ENCODE measurements at regions of chr15 and their contacts with region 1.

Region 1: GRCh38 chr15:81265944-81266775 is 57.8 kb downstream of the STARD5 start:
- DNase-seq: peak; percentile 47 to 89 (median 75)
- ATAC-seq: peak; percentile 89 to 91 (median 90)
- H3K4me3 ChIP-seq: peak overlapping the region; percentile 0 to 49
- H3K4me3 Mint-ChIP-seq: peak overlapping the region; percentile 64 to 72 (median 64)
- H3K27ac ChIP-seq: no peak overlapping the region
- H3K27ac Mint-ChIP-seq: peak overlapping the region in 1 of 2 donors; percentile 40
- H3K4me1 ChIP-seq: peaks cover 25 to 31% of the 10 kb centered on the region in 2 experiments
- H3K4me1 Mint-ChIP-seq: peaks cover 27 to 37% (median 36%) of the 10 kb centered on the region in 3 donors
- H3K27me3 ChIP-seq: peaks cover 0 to 17% of the 10 kb centered on the region in 2 experiments
- H3K27me3 Mint-ChIP-seq: no peaks in the 10 kb centered on the region

Region 2: DNA sequence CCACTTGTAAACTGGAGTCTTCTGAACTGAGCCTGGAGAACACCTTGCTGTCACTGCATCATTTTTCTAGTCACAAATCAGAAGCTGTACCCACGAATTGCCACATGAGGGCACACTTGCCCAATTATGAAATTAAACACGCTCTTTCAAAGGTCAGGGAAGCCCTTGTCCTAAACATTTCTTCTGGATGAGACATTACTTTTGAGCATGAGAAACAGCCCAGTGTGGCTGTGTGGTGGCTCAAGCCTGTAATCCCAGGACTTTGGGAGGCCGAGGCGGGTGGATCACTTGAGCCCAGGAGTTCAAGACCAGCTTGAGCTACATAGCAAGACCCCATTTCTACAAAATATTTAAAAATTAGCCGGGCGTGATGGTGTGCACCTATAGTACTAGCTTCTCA is 159.6 kb before region 1 on chr15:
- CTCF ChIA-PET with region 1: interaction called, 10 to 37 read pairs
- POLR2A ChIA-PET with region 1: no interaction called
- DNase-seq: peak in 21 of 35 experiments; percentile 4 to 62 (median 21)
- ATAC-seq: peak in 1 of 4 experiments; percentile 65
- H3K4me3 ChIP-seq: no peak overlapping the region
- H3K4me3 Mint-ChIP-seq: no peak overlapping the region
- H3K27ac ChIP-seq: no peak overlapping the region
- H3K27ac Mint-ChIP-seq: peak overlapping the region in 1 of 2 donors; percentile 16
- H3K4me1 ChIP-seq: no peaks in the 10 kb centered on the region
- H3K4me1 Mint-ChIP-seq: no peaks in the 10 kb centered on the region
- H3K27me3 ChIP-seq: peaks cover 0 to 8% of the 10 kb centered on the region in 2 experiments
- H3K27me3 Mint-ChIP-seq: peaks cover 19 to 22% of the 10 kb centered on the region in 2 donors

Region 3: DNA sequence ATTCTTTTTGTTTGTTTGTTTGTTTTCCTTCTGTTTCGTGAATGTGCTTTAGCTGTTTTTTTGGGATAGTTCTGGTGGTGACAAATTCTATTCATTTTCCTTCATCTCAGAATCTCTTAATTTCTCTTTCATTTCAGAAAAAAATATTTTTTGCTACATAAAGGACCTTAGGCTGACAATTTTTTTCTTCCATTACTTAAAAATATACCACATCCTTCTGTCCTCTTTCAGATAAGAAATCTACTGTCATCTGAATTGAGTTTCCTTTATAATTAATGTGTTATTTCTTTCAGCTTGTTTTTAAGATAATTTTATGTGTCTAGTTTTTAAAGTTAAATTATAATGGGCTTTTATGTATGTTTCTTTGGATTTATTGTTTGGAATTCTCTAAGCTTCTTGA is 21.9 kb before region 1 on chr15:
- CTCF ChIA-PET with region 1: interaction called, 3 to 13 read pairs
- POLR2A ChIA-PET with region 1: no interaction called
- DNase-seq: no peak
- ATAC-seq: no peak
- H3K4me3 ChIP-seq: no peak overlapping the region
- H3K4me3 Mint-ChIP-seq: no peak overlapping the region
- H3K27ac ChIP-seq: no peak overlapping the region
- H3K27ac Mint-ChIP-seq: peak overlapping the region in 1 of 2 donors; percentile 42
- H3K4me1 ChIP-seq: peaks cover 0 to 2% of the 10 kb centered on the region in 2 experiments
- H3K4me1 Mint-ChIP-seq: peaks cover 0 to 12% (median 9%) of the 10 kb centered on the region in 3 donors
- H3K27me3 ChIP-seq: no peaks in the 10 kb centered on the region
- H3K27me3 Mint-ChIP-seq: peaks cover 0 to 4% of the 10 kb centered on the region in 2 donors

Region 4: DNA sequence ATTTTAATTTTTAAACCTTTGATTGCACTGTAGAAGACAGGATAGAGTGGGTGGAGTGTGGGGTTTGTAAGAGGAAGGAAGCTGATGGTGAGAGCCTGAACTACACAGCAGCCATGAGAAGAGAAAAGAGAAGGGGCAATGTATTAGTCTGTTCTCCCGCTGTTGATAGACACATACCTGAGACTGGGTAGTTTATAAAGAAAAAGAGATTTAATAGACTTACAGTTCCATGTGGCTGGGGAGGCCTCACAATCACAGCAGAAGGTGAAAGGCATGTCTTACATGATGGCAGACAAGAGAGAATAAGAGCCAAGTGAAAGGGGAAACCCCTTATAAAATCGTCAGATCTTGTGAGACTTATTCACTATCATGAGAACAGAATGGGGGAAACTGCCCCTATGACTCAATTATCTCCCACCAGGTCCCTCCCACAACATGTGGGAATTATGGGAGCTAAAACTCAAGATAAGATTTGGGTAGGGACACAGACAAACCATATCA is 20.5 kb after region 1 on chr15:
- CTCF ChIA-PET with region 1: interaction called, 9 to 15 read pairs
- POLR2A ChIA-PET with region 1: no interaction called
- DNase-seq: peak in 6 of 35 experiments; percentile 13 to 67 (median 46)
- ATAC-seq: peak; percentile 95 to 98 (median 97)
- H3K4me3 ChIP-seq: no peak overlapping the region
- H3K4me3 Mint-ChIP-seq: peak overlapping the region; percentile 62 to 72 (median 70)
- H3K27ac ChIP-seq: peak overlapping the region; percentile 86
- H3K27ac Mint-ChIP-seq: peak overlapping the region; percentile 97 to 98
- H3K4me1 ChIP-seq: peaks cover 68 to 79% of the 10 kb centered on the region in 2 experiments
- H3K4me1 Mint-ChIP-seq: peaks cover 80 to 88% (median 82%) of the 10 kb centered on the region in 3 donors
- H3K27me3 ChIP-seq: no peaks in the 10 kb centered on the region
- H3K27me3 Mint-ChIP-seq: no peaks in the 10 kb centered on the region

Region 5: DNA sequence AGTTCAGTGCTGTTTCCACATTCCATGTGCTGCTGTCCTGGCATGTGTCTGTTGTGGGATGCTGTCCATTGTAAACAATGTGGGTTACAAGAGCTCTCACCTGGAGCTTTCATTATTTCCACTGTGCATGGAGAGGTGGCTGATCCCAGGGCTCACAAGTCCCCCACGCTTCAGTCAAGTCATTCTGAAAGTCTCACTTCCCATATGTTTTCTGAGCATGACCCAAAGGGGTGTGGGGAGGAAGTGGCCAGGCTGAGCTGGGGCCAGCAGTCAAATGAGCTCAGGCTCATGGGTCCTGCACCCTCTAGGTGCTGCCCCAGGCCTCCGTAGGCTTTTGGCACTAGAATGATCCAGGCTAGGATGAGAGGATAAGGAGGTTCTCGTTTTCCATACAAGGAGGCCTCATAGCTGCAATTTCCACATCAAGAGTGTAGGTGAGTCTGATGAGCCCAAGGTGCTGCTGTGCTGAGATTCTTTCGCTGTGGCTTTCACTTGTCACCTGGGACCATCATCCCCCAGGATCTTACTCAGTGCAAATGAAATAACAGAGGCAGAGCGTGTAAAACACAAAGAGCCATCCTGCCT is 35.7 kb after region 1 on chr15:
- CTCF ChIA-PET with region 1: interaction called, 10 to 13 read pairs
- POLR2A ChIA-PET with region 1: no interaction called
- DNase-seq: no peak
- ATAC-seq: no peak
- H3K4me3 ChIP-seq: peak overlapping the region; percentile 68 to 98
- H3K4me3 Mint-ChIP-seq: peak overlapping the region; percentile 95 to 100 (median 100)
- H3K27ac ChIP-seq: peak overlapping the region; percentile 67
- H3K27ac Mint-ChIP-seq: peak overlapping the region; percentile 100
- H3K4me1 ChIP-seq: peaks cover 50 to 78% of the 10 kb centered on the region in 2 experiments
- H3K4me1 Mint-ChIP-seq: peaks cover 57 to 86% (median 63%) of the 10 kb centered on the region in 3 donors
- H3K27me3 ChIP-seq: no peaks in the 10 kb centered on the region
- H3K27me3 Mint-ChIP-seq: no peaks in the 10 kb centered on the region

Region 6: DNA sequence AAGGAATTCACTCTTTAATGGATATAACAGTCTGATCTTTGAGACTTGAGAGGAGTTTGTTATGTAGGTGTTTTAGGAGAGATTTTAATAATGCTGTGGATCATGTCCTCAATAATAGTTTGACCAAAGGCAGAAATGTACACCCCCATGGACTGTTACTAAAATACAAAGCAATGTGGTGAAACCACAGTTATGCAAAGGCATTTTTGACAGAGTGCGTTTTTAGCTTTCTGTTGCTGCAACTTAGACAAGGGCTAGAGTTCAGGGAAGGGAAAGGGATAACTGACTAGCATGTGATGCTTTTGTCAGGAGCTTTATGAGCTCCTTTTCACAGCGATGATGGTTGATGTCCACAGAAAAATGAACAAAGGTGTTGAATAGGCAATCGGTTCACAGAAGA is 61.4 kb after region 1 on chr15:
- CTCF ChIA-PET with region 1: interaction called, 3 to 12 read pairs
- POLR2A ChIA-PET with region 1: no interaction called
- DNase-seq: no peak
- ATAC-seq: no peak
- H3K4me3 ChIP-seq: no peak overlapping the region
- H3K4me3 Mint-ChIP-seq: no peak overlapping the region
- H3K27ac ChIP-seq: no peak overlapping the region
- H3K27ac Mint-ChIP-seq: peak overlapping the region in 1 of 2 donors; percentile 9
- H3K4me1 ChIP-seq: peaks cover 6 to 17% of the 10 kb centered on the region in 2 experiments
- H3K4me1 Mint-ChIP-seq: peaks cover 38 to 72% (median 46%) of the 10 kb centered on the region in 3 donors
- H3K27me3 ChIP-seq: no peaks in the 10 kb centered on the region
- H3K27me3 Mint-ChIP-seq: no peaks in the 10 kb centered on the region

Region 7: DNA sequence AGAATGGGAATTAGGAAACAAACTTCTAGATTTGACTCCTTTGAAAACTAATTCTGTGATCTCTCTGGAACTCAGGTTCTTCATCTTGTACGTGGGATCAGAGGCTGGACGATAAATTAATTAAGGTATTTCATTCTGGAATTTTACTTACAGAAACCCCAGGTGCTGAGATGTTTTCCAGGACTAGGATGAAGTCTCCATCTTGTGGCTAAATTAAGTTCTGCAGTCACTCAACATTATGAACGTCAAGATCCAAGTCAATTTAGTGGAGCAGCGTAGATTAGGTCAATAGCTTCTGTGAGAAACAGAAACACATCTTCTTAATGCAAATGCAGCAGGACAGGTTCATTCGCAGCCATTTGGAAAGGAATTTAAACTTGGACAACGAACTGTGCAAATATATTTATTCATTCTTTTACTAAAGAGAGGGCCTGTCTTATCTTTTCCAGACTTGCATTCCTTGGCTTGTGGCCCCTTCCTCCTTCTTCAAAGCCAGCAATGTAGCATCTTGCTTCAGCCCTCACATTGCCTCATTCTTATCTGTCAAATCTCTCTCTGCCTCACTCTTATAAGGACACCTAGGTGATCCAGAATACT is 134.6 kb after region 1 on chr15:
- CTCF ChIA-PET with region 1: interaction called, 7 to 39 read pairs
- POLR2A ChIA-PET with region 1: no interaction called
- DNase-seq: peak in 2 of 35 experiments; percentile 32 to 77
- ATAC-seq: peak in 1 of 4 experiments; percentile 48
- H3K4me3 ChIP-seq: no peak overlapping the region
- H3K4me3 Mint-ChIP-seq: no peak overlapping the region
- H3K27ac ChIP-seq: no peak overlapping the region
- H3K27ac Mint-ChIP-seq: no peak overlapping the region
- H3K4me1 ChIP-seq: no peaks in the 10 kb centered on the region
- H3K4me1 Mint-ChIP-seq: peaks cover 0 to 3% (median 0%) of the 10 kb centered on the region in 3 donors
- H3K27me3 ChIP-seq: no peaks in the 10 kb centered on the region
- H3K27me3 Mint-ChIP-seq: no peaks in the 10 kb centered on the region

Region 8: GRCh38 chr15:81433462-81433861 is 167.3 kb after region 1 on chr15:
- CTCF ChIA-PET with region 1: no interaction called
- POLR2A ChIA-PET with region 1: no interaction called
- DNase-seq: no peak
- ATAC-seq: no peak
- H3K4me3 ChIP-seq: no peak overlapping the region
- H3K4me3 Mint-ChIP-seq: no peak overlapping the region
- H3K27ac ChIP-seq: no peak overlapping the region
- H3K27ac Mint-ChIP-seq: no peak overlapping the region
- H3K4me1 ChIP-seq: no peaks in the 10 kb centered on the region
- H3K4me1 Mint-ChIP-seq: no peaks in the 10 kb centered on the region
- H3K27me3 ChIP-seq: no peaks in the 10 kb centered on the region
- H3K27me3 Mint-ChIP-seq: peaks cover 0 to 30% of the 10 kb centered on the region in 2 donors